ENCODE measurements at regions of chr21 and their contacts with region 1.

Region 1: GRCh38 chr21:31107871-31108270 is 69.6 kb upstream of the KRTAP19-8 start:
- DNase-seq: no peak
- ATAC-seq: no peak
- H3K4me3 Mint-ChIP-seq: no peak overlapping the region
- H3K27ac Mint-ChIP-seq: no peak overlapping the region
- H3K4me1 Mint-ChIP-seq: peaks cover 15% of the 10 kb centered on the region
- H3K27me3 Mint-ChIP-seq: peaks cover 7% of the 10 kb centered on the region

Region 2: GRCh38 chr21:31132574-31133242 is 24.8 kb after region 1 on chr21:
- CTCF ChIA-PET with region 1: interaction called, 13 read pairs
- POLR2A ChIA-PET with region 1: no interaction called
- DNase-seq: peak; percentile 83
- ATAC-seq: peak; percentile 83
- H3K4me3 Mint-ChIP-seq: peak overlapping the region; percentile 50
- H3K27ac Mint-ChIP-seq: peak overlapping the region; percentile 73
- H3K4me1 Mint-ChIP-seq: peaks cover 47% of the 10 kb centered on the region
- H3K27me3 Mint-ChIP-seq: peaks cover 7% of the 10 kb centered on the region